ENCODE measurements at regions of chr1 and their contacts with region 1.

Region 1: DNA sequence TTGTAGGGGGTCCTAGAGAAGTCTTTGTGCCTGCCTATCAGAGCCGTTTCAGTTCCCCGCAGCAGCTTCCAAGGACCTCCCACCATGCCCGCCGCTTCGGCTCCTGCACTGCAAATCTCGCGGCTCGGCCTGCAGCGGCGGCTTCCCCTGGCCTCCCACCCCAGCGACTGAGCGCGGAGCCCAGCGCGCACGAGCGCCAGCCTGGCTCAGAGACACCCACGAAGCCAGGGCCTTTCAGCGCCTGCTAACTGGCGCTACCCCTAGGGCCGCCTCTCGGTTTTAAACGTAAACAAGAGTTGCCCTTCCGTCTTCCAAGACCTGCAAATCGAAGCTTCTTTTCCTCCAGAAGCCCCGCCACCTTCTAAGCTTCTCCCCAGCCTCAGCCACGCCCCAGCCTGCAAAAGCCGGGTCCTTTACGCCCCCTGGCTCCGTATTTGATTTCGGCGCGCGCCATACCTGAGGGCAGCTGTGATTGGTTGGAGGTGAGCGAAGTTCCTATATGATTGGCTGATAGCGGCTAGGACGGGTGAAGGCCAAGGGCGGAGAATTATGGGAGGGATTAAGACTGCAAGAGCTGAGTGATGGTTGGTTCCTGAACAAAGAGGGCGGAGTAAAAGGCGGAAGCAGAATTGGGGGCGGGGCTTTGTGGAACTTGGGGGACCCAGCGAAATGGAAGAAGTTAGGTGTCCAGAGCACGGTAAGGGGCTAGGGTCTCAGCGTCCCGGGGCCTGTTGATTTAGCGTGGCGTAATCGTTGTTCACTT is at the start of gene TTF2:
- DNase-seq: peak; percentile 98
- ATAC-seq: peak; percentile 96
- H3K4me3 ChIP-seq: peak within 1 kb of the TSS; percentile 71 to 95 (median 79)
- H3K4me3 Mint-ChIP-seq: no peak within 1 kb of the TSS
- H3K27ac ChIP-seq: peak within 1 kb of the TSS; percentile 69 to 76
- H3K27ac Mint-ChIP-seq: no peak within 1 kb of the TSS
- H3K4me1 ChIP-seq: peaks cover 14 to 17% of the 10 kb centered on the region in 2 donors
- H3K4me1 Mint-ChIP-seq: peaks cover 25% of the 10 kb centered on the region
- H3K27me3 ChIP-seq: no peaks in the 10 kb centered on the region
- H3K27me3 Mint-ChIP-seq: no peaks in the 10 kb centered on the region
- CTCF ChIP-seq: peak; percentile 5
- total RNA-seq, gene TTF2: 28.9 and 29.1 TPM in 2 replicates

Region 2: DNA sequence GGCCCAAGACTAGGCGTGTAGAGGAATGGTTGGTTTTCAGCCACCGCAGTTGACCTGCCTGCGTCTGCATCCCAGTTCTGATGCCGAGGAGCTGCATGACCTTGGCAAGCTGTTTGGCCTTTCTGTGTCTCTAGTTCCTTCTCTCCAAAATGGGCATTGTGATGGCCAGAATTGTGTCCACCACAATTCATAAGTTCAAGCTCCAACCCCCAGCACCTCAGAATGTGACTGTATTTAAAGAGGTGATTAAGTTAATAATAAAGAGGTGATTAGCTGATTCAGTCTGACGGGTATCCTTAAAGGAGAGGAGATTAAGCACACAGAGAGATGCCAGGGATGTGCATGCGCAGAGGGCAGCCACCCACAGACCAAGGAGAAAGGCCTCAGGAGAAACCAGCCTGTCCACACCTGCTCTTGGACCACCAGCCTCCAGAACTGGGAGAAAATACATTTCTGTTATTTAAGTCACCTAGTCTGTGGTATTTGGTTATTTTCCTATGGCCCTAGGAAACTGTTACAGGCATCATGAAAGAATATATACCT is 920.2 kb before region 1 on chr1:
- CTCF ChIA-PET with region 1: interaction called, 10 read pairs
- POLR2A ChIA-PET with region 1: no interaction called
- intact Hi-C with region 1: no loop called
- DNase-seq: no peak
- ATAC-seq: no peak
- H3K4me3 ChIP-seq: no peak overlapping the region
- H3K4me3 Mint-ChIP-seq: no peak overlapping the region
- H3K27ac ChIP-seq: no peak overlapping the region
- H3K27ac Mint-ChIP-seq: no peak overlapping the region
- H3K4me1 ChIP-seq: no peaks in the 10 kb centered on the region
- H3K4me1 Mint-ChIP-seq: peaks cover 5% of the 10 kb centered on the region
- H3K27me3 ChIP-seq: peaks cover 0 to 5% (median under 1%) of the 10 kb centered on the region in 4 experiments
- H3K27me3 Mint-ChIP-seq: peaks cover 11% of the 10 kb centered on the region
- CTCF ChIP-seq: no peak

Region 3: GRCh38 chr1:116724765-116725375 is 335.0 kb before region 1 on chr1:
- CTCF ChIA-PET with region 1: interaction called, 49 read pairs
- POLR2A ChIA-PET with region 1: no interaction called
- intact Hi-C with region 1: loop called (anchors 1 kb)
- DNase-seq: peak; percentile 67
- ATAC-seq: no peak
- H3K4me3 ChIP-seq: no peak overlapping the region
- H3K4me3 Mint-ChIP-seq: no peak overlapping the region
- H3K27ac ChIP-seq: no peak overlapping the region
- H3K27ac Mint-ChIP-seq: no peak overlapping the region
- H3K4me1 ChIP-seq: no peaks in the 10 kb centered on the region
- H3K4me1 Mint-ChIP-seq: peaks cover 7% of the 10 kb centered on the region
- H3K27me3 ChIP-seq: no peaks in the 10 kb centered on the region
- H3K27me3 Mint-ChIP-seq: no peaks in the 10 kb centered on the region
- CTCF ChIP-seq: peak; percentile 89

Region 4: DNA sequence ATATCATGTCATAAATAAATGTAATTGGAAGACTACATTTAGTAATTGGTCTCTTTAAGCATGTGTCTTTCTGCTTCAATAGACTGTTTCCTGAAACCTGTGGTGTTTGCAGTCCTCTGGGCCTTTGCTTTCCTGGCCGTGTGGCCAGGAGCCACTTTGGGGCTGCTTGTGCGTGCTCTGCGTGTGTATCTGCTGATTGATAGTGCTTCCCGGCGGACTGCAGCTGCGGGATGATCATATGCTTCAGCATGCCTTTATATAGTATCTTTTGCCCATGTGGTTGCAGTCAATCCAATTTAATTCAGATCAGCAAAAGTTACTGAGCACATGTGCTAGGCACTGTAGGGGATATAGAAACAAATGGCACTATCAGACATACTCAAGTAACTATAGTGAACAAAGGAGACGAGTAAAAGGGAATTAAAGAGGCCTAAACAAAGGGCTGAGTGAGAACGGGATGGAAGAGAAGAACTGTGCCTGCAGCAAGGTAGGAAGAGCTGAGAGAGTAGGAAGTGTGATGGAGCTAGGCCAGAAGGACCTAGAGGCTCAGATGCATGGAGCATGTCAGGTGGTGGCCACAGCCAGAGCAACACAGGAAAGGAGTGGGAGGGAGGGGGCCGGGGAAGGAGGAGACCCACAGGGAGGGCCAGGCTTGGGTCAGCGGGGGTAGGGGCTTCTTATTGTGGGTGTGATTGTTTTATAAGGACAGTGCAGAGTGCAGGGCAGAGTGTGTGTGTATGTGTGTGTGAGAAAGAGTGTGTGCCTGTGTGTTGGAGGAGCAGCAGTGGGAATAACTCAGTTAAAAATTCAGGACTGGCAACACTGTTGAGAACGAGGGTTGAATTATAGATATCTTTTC is 26.9 kb before region 1 on chr1:
- CTCF ChIA-PET with region 1: no interaction called
- POLR2A ChIA-PET with region 1: no interaction called
- intact Hi-C with region 1: no loop called
- DNase-seq: no peak
- ATAC-seq: no peak
- H3K4me3 ChIP-seq: no peak overlapping the region
- H3K4me3 Mint-ChIP-seq: no peak overlapping the region
- H3K27ac ChIP-seq: no peak overlapping the region
- H3K27ac Mint-ChIP-seq: no peak overlapping the region
- H3K4me1 ChIP-seq: no peaks in the 10 kb centered on the region
- H3K4me1 Mint-ChIP-seq: no peaks in the 10 kb centered on the region
- H3K27me3 ChIP-seq: no peaks in the 10 kb centered on the region
- H3K27me3 Mint-ChIP-seq: no peaks in the 10 kb centered on the region
- CTCF ChIP-seq: no peak

Region 5: DNA sequence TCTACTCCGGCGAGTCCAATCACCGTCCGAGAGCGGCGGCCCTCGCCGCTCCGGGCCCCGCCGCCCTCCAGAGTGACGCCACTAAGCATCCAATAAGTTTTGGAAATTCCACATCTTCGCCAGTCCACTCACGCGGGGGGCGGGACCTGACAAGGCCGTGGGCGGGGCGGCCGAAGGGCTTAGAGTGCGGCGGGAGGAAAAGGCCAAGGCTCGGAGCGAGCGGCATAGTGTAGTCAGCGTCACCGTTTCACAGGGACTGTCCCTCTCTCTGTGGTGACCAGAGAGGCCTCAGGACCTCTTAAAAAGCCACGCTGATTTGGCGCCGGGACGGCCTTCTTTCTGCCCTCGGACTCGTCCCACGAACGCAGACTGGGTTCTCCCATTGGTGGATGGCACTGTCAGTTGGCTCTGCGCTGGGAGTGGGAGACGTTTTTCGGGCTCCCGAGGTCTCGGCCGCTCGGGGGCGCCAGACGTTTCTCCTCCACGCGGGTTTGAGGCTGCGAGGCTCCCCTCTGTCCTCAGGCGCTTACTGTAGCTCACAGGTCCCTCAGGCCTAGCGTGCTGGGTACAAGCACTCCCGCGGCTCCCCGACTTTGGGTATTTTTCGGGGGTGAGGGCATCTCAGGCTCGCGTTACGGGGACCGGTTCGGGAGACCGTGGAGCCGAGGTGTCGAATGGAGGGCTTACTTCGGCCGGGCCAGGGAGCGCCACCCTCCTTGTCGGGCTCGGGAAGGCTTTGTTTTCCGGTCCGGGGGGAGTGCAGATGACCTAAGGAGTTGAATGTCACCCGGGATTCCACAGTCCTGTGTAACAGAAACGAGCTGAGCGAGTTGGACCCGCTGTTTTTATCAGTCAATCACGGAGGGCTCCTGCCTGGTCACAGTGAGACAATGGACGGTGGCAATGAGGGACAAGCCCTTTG is 62.2 kb after region 1 on chr1:
- CTCF ChIA-PET with region 1: interaction called, 6 read pairs
- POLR2A ChIA-PET with region 1: interaction called, 6 read pairs
- intact Hi-C with region 1: loop called (anchors 1 kb)
- DNase-seq: peak; percentile 88
- ATAC-seq: peak; percentile 87
- H3K4me3 ChIP-seq: peak overlapping the region; percentile 72 to 88 (median 80)
- H3K4me3 Mint-ChIP-seq: peak overlapping the region; percentile 92
- H3K27ac ChIP-seq: peak overlapping the region in 1 of 2 donors; percentile 32
- H3K27ac Mint-ChIP-seq: peak overlapping the region; percentile 69
- H3K4me1 ChIP-seq: peaks cover 9 to 15% of the 10 kb centered on the region in 2 donors
- H3K4me1 Mint-ChIP-seq: peaks cover 7% of the 10 kb centered on the region
- H3K27me3 ChIP-seq: peaks cover 0 to 13% (median 3%) of the 10 kb centered on the region in 4 experiments
- H3K27me3 Mint-ChIP-seq: peaks cover 6% of the 10 kb centered on the region
- CTCF ChIP-seq: peak; percentile 72

Region 6: GRCh38 chr1:117205368-117205767 is 145.5 kb after region 1 on chr1:
- CTCF ChIA-PET with region 1: no interaction called
- POLR2A ChIA-PET with region 1: no interaction called
- intact Hi-C with region 1: no loop called
- DNase-seq: no peak
- ATAC-seq: no peak
- H3K4me3 ChIP-seq: no peak overlapping the region
- H3K4me3 Mint-ChIP-seq: no peak overlapping the region
- H3K27ac ChIP-seq: no peak overlapping the region
- H3K27ac Mint-ChIP-seq: no peak overlapping the region
- H3K4me1 ChIP-seq: no peaks in the 10 kb centered on the region
- H3K4me1 Mint-ChIP-seq: no peaks in the 10 kb centered on the region
- H3K27me3 ChIP-seq: peaks cover 0 to 12% (median 0%) of the 10 kb centered on the region in 4 experiments
- H3K27me3 Mint-ChIP-seq: peaks cover 28% of the 10 kb centered on the region
- CTCF ChIP-seq: no peak

Region 7: DNA sequence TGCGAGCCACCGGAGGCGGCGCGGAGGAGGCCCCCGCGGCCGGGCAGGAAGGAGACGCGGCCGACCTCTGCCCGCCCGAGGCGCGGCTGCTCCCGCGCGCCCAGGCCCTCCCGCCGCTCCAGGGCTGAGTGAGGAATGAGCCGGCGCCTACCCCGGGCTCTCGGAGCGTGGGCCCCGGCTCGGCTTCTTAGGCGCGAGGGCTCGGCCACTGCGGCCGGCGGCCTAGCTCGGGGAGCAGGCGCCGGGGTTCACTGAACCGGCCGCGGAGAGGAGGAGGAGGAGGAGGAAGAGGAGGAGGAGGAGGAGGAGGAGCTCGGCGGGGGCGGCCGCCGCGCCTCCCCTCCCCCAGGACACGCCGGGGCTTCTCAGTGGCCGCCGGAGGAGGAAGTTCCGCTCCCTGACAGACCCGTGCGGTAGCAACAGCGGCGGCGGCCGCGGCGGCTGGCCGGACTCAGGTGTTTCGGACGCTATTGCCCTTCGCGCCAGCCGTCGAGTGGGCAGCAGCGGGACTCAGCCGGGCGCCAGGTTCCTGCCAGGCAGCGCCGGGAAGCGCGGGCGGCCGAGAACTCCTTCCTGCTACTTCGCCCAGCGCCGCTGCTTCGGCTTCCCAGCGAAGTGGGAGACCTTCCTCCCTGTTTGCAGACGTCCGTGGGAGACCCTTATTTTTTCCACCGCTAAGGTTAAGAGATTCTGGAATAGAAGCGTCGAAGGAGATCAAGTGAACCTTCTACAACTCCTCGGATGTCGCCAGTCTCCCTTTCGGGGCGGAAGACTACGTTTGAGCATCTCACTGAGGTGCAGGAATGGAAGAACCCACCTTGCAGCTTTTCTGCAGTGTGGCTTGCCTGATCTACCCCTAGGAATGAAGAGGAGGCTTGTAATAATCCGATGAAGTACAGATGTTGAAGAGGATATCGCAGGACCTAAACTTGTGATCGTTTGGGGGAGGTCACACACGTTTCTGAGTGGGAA is 307.5 kb after region 1 on chr1 and contains the start of gene MAN1A2:
- CTCF ChIA-PET with region 1: no interaction called
- POLR2A ChIA-PET with region 1: interaction called, 3 read pairs
- intact Hi-C with region 1: loop called (anchors 5 kb)
- DNase-seq: peak; percentile 90
- ATAC-seq: peak; percentile 76
- H3K4me3 ChIP-seq: peak within 1 kb of the TSS; percentile 84 to 94 (median 92)
- H3K4me3 Mint-ChIP-seq: peak within 1 kb of the TSS; percentile 96
- H3K27ac ChIP-seq: peak within 1 kb of the TSS; percentile 86 to 88
- H3K27ac Mint-ChIP-seq: peak within 1 kb of the TSS; percentile 98
- H3K4me1 ChIP-seq: peaks cover 34 to 46% of the 10 kb centered on the region in 2 donors
- H3K4me1 Mint-ChIP-seq: peaks cover 63% of the 10 kb centered on the region
- H3K27me3 ChIP-seq: no peaks in the 10 kb centered on the region
- H3K27me3 Mint-ChIP-seq: no peaks in the 10 kb centered on the region
- CTCF ChIP-seq: no peak
- total RNA-seq, gene MAN1A2: 54.0 and 55.6 TPM in 2 replicates